ENCODE measurements at regions of chr6 and their contacts with region 1.

Region 1: GRCh38 chr6:46410334-46410953 is 80.8 kb downstream of the RCAN2 start:
- DNase-seq: peak in 3 of 9 experiments; percentile 31 to 79 (median 73)
- ATAC-seq: no peak
- H3K4me3 ChIP-seq: no peak overlapping the region
- H3K4me3 Mint-ChIP-seq: no peak overlapping the region
- H3K27ac ChIP-seq: no peak overlapping the region
- H3K27ac Mint-ChIP-seq: no peak overlapping the region
- H3K4me1 ChIP-seq: no peaks in the 10 kb centered on the region
- H3K4me1 Mint-ChIP-seq: no peaks in the 10 kb centered on the region
- H3K27me3 ChIP-seq: no peaks in the 10 kb centered on the region
- H3K27me3 Mint-ChIP-seq: no peaks in the 10 kb centered on the region
- CTCF ChIP-seq: peak; percentile 63

Region 2: GRCh38 chr6:46078294-46078693 is 332.1 kb before region 1 on chr6:
- CTCF ChIA-PET with region 1: interaction called, 13 read pairs
- POLR2A ChIA-PET with region 1: no interaction called
- intact Hi-C with region 1: no loop called
- DNase-seq: no peak
- ATAC-seq: no peak
- H3K4me3 ChIP-seq: no peak overlapping the region
- H3K4me3 Mint-ChIP-seq: no peak overlapping the region
- H3K27ac ChIP-seq: no peak overlapping the region
- H3K27ac Mint-ChIP-seq: no peak overlapping the region
- H3K4me1 ChIP-seq: no peaks in the 10 kb centered on the region
- H3K4me1 Mint-ChIP-seq: peaks cover 4% of the 10 kb centered on the region
- H3K27me3 ChIP-seq: no peaks in the 10 kb centered on the region
- H3K27me3 Mint-ChIP-seq: no peaks in the 10 kb centered on the region
- CTCF ChIP-seq: no peak

Region 3: GRCh38 chr6:46221222-46221793 is 189.1 kb before region 1 on chr6:
- CTCF ChIA-PET with region 1: interaction called, 6 read pairs
- POLR2A ChIA-PET with region 1: no interaction called
- intact Hi-C with region 1: loop called (anchors 1 to 5 kb)
- DNase-seq: peak in 2 of 9 experiments; percentile 45 to 52
- ATAC-seq: no peak
- H3K4me3 ChIP-seq: no peak overlapping the region
- H3K4me3 Mint-ChIP-seq: no peak overlapping the region
- H3K27ac ChIP-seq: no peak overlapping the region
- H3K27ac Mint-ChIP-seq: no peak overlapping the region
- H3K4me1 ChIP-seq: no peaks in the 10 kb centered on the region
- H3K4me1 Mint-ChIP-seq: no peaks in the 10 kb centered on the region
- H3K27me3 ChIP-seq: no peaks in the 10 kb centered on the region
- H3K27me3 Mint-ChIP-seq: no peaks in the 10 kb centered on the region
- CTCF ChIP-seq: peak; percentile 41

Measured in CD8-positive, alpha-beta T cell (primary cell).